Heart right ventricle (tissue), 16 donors: ENCODE measurements at regions of chr9 and their contacts with region 1.

Region 1: DNA sequence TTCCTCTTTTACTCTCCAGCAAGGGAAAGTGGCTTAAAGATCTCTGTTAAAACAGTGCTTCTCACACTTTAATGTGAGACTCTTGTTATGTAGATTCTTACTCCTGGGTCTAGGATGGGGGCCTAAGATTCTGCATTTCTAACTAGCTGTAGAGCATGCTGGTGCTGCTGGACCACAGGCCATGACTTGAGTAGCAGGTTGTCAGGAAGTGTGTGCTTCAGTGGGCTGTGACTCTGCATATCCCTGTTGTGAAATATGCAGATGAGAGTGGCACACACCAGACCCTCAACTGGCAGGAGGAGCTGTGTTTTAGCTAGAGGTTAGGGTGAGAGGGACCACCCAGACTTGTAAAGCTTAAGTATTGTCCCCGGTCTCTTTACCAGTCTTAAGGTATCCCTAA is 191.1 kb upstream of the DMRT1 start:
- DNase-seq: no peak
- ATAC-seq: peak in 2 of 8 donors; percentile 10 to 18
- H3K4me3 ChIP-seq: peak overlapping the region in 1 of 10 donors; percentile 9
- H3K27ac ChIP-seq: peak overlapping the region in 9 of 10 donors; percentile 1 to 90 (median 45)
- H3K4me1 ChIP-seq: peaks cover 0 to 78% (median 60%) of the 10 kb centered on the region in 9 donors
- H3K27me3 ChIP-seq: no peaks in the 10 kb centered on the region
- CTCF ChIP-seq: no peak

Region 2: GRCh38 chr9:673966-674526 is 23.7 kb after region 1 on chr9:
- intact Hi-C with region 1: loop called in 1 of 10 experiments (anchors 2 kb)
- DNase-seq: no peak
- ATAC-seq: peak in 2 of 8 donors; percentile 20 to 30
- H3K4me3 ChIP-seq: no peak overlapping the region
- H3K27ac ChIP-seq: peak overlapping the region in 3 of 10 donors; percentile 2 to 52 (median 41)
- H3K4me1 ChIP-seq: peaks cover 0 to 52% (median 27%) of the 10 kb centered on the region in 9 donors
- H3K27me3 ChIP-seq: no peaks in the 10 kb centered on the region
- CTCF ChIP-seq: no peak

Region 3: DNA sequence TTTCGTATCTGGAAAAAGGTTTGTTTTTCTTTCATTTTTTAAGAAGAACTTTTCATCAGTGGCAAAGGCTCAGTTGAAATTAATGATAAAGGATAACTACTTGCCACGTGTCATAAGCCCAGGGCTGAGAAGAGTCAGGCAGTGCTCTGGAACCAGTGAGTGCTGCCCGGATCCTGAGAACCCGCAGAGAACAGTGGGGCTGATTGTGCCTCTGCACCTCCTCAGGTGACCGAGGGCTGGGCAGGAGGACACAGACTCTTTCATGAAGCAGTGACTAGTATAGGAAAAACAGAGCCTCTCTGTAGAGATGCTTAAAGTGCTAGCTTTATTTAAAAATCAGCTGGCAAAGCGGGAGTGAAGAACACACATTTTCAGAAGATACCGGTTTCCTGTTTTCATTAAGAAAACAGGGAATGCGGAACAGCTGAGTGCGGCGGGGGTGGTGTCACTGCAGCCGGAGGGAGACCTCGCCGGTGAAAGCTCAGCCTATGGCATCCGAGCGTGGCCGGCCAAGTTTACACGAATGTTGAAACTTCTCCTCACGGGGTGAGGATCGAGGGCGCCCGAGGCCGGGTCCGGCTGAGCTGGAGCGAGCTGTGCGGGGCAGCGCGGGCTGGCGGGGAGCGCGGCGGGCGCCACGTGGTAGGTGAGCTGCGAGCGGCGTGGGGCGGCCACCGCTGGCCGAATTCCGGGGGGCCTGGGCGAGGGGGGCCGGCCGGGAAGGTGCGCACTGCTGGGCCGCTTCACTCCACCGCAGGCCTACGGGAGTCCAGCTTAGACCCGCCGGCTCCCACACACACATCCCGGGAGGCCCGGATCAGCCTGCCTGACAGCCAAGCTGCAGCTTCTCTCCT is 56.5 kb after region 1 on chr9:
- intact Hi-C with region 1: loop called in 1 of 10 experiments (anchors 10 kb)
- DNase-seq: peak; percentile 53 to 69
- ATAC-seq: peak; percentile 61 to 82 (median 69)
- H3K4me3 ChIP-seq: peak overlapping the region in 9 of 10 donors; percentile 32 to 64 (median 55)
- H3K27ac ChIP-seq: peak overlapping the region; percentile 13 to 80 (median 68)
- H3K4me1 ChIP-seq: peaks cover 6 to 60% (median 35%) of the 10 kb centered on the region in 9 donors
- H3K27me3 ChIP-seq: no peaks in the 10 kb centered on the region
- CTCF ChIP-seq: no peak